Activated CD8-positive, alpha-beta memory T cell treated with anti-CD3 and anti-CD28 coated beads, Interleukin-2, amount 10 ng/mL, durations not matched to agents 7 days and 5 days (primary cell): ENCODE measurements at regions of chr6 and their contacts with region 1.

Region 1: GRCh38 chr6:143575440-143575839 is 63.9 kb upstream of the FUCA2 start:
- DNase-seq: peak; percentile 59
- ATAC-seq: peak; percentile 77
- H3K4me3 Mint-ChIP-seq: no peak overlapping the region
- H3K27ac Mint-ChIP-seq: no peak overlapping the region
- H3K4me1 Mint-ChIP-seq: peaks cover 4% of the 10 kb centered on the region
- H3K27me3 Mint-ChIP-seq: peaks cover 6% of the 10 kb centered on the region

Region 2: DNA sequence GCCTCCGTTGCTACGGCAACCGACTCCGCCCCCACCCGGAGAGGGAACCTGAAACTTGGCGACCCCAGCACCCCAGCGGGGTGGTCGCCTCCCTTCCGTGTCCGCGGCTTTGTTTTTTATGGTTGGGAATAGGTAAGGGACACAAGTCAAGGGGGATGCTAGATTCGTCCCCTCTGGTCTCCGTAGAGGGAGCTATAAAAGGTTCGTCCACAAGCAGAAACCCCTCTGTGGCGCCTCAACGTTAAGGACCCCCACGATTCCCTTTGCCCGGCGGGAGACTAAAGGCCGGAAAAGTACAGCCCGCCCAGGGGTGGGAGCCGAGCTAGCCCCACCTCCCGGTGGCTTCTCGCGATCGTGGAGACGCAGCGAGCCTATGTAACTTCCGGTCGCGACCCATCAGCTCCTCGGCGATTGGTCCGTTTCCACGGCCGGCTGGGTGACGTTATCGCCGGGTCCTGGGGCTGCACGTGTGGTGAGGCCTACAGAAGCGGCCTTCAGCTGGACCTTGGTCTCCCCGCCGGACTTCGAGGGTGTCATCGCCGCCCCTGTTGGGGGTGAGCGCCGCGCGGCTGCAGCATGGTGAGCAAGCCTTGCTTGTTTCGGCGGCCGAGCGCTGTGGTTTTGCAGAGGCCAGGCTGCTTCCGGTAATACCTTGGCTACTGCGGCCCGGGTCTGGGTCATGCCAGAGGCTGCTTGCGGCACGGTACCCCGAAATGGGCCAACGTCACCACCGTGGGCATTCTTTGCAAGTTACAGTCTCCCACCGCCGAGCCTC is 267.6 kb after region 1 on chr6 and contains the start of gene LTV1:
- CTCF ChIA-PET with region 1: interaction called, 17 read pairs
- DNase-seq: peak; percentile 96
- ATAC-seq: peak; percentile 97
- H3K4me3 Mint-ChIP-seq: peak within 1 kb of the TSS; percentile 96
- H3K27ac Mint-ChIP-seq: peak within 1 kb of the TSS; percentile 95
- H3K4me1 Mint-ChIP-seq: peaks cover 23% of the 10 kb centered on the region
- H3K27me3 Mint-ChIP-seq: no peaks in the 10 kb centered on the region
- total RNA-seq, gene LTV1: 22.5 to 35.7 TPM

Region 3: GRCh38 chr6:144013486-144013909 is 438.1 kb after region 1 on chr6:
- CTCF ChIA-PET with region 1: interaction called, 58 read pairs
- DNase-seq: peak; percentile 69
- ATAC-seq: peak; percentile 45
- H3K4me3 Mint-ChIP-seq: no peak overlapping the region
- H3K27ac Mint-ChIP-seq: no peak overlapping the region
- H3K4me1 Mint-ChIP-seq: peaks cover 2% of the 10 kb centered on the region
- H3K27me3 Mint-ChIP-seq: peaks cover 15% of the 10 kb centered on the region